ENCODE measurements at regions of chr19 and their contacts with region 1.

Region 1: DNA sequence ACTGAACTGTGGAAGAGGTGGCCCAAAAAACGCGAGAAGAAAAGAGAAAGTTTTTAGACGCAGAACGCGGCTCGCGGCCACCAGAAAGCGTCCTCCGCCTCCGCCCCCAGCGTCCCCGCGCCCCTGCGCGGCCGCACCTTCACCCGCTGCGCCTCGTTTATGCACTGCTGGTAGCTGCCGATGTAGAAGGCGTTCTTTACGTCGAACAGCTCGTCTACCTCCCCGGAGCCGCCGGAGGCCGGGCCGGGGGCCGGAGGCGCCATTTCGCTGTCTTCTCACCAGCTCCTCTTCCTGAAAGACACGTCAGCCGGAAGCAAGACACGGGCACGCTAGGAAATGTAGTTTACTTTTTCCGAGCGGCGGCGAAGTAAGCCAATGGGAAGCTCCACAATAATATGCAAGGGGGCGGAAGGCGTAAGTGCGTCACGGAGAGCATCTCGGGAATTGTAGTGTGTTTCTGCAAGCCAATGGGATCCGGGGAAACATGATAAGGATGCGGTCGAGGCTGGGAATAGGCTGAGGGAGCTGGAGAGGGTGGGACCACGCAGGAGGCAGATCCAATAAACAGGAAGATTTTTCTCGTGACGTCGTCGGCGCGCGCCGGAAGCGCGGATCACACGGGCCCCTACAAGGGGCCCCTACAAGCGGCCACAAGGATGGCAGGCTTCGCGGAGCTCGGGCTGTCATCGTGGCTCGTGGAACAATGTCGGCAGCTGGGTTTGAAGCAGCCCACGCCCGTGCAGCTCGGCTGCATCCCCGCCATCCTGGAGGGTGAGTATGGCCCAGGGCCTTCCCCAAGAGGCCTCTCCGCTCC is at the starts of genes COPE and DDX49:
- DNase-seq: peak; percentile 97 to 100 (median 99)
- H3K4me3 ChIP-seq: peak within 1 kb of the TSS; percentile 92 to 93
- H3K4me3 Mint-ChIP-seq: peak within 1 kb of the TSS; percentile 72 to 97 (median 93)
- H3K27ac ChIP-seq: peak within 1 kb of the TSS; percentile 94
- H3K27ac Mint-ChIP-seq: peak within 1 kb of the TSS; percentile 73 to 98 (median 96)
- H3K4me1 ChIP-seq: peaks cover 45% of the 10 kb centered on the region
- H3K4me1 Mint-ChIP-seq: peaks cover 21 to 64% (median 35%) of the 10 kb centered on the region in 4 donors
- H3K27me3 ChIP-seq: no peaks in the 10 kb centered on the region
- H3K27me3 Mint-ChIP-seq: no peaks in the 10 kb centered on the region
- total RNA-seq, gene COPE: 165 to 170 TPM
- total RNA-seq, gene DDX49: 40.9 to 43.6 TPM

Region 2: DNA sequence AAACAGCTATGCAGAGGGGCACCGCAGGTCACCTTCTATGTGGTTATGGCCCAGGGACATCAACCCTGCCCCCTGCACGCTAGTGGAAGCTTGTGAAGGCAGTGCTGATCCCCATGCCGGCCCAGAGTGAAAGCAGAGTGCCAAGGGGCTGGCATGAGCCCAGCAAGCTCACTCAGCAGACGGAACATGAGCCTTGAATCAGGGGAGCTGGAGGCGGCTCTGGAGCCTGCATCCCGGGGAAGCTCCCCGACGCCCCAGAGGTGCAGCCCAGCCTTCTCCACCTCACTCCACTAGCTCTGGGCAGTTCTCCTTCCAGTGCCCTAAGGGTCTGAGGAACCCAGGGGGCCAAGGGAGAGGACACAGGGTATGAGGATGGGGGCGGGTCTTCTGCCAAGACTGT is 462.3 kb before region 1 on chr19:
- CTCF ChIA-PET with region 1: no interaction called
- POLR2A ChIA-PET with region 1: no interaction called
- intact Hi-C with region 1: no loop called
- DNase-seq: no peak
- H3K4me3 ChIP-seq: no peak overlapping the region
- H3K4me3 Mint-ChIP-seq: no peak overlapping the region
- H3K27ac ChIP-seq: no peak overlapping the region
- H3K27ac Mint-ChIP-seq: peak overlapping the region in 2 of 7 donors; percentile 64 to 74
- H3K4me1 ChIP-seq: no peaks in the 10 kb centered on the region
- H3K4me1 Mint-ChIP-seq: peaks cover 1 to 11% (median 5%) of the 10 kb centered on the region in 4 donors
- H3K27me3 ChIP-seq: no peaks in the 10 kb centered on the region
- H3K27me3 Mint-ChIP-seq: no peaks in the 10 kb centered on the region

Region 3: DNA sequence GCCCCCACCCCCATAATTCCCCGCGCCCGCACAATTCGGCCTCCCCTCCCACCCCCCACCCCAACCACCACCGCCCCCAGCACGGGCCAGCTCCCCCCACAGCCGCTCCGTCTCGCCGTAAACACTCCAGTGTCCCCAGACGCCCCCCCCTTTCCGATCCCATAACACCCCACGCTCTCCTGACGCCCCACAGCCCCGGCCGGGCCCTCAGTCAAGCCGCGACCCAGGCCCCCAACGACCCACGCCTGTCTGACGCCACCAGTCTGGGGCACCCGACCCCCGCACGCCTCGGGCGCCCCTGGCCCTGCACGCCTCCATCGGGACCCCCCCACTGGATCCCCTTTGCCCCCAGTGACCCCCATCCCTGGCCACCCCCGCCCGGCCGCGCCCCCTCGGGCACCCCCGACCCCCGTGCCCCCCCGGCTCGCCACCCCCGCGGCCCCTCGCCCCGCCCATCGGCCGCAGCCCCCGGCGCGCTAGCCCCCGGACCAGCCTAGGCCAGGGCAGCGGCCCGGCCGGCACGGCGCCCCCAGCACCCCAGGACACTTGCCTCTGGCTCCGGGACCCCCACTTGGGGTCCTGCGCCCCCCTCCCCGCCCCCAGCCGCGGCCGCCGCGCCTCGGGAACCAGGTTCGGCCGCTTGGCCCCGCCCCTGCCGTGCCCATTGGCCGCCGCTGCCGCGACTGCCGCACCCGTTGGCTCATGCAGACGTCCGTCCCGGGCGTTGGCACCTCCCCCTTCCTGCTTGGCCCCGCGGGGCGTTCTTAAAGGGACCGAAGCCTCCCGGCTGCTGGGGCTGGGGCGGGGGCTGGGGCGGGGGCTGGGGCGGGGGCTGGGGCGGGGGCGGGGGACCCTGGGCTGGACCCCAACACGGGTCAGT is 376.1 kb before region 1 on chr19 and contains the start of gene FKBP8:
- CTCF ChIA-PET with region 1: no interaction called
- POLR2A ChIA-PET with region 1: interaction called, 12 read pairs
- intact Hi-C with region 1: no loop called
- DNase-seq: peak; percentile 89 to 94 (median 91)
- H3K4me3 ChIP-seq: peak within 1 kb of the TSS; percentile 52 to 59
- H3K4me3 Mint-ChIP-seq: peak within 1 kb of the TSS; percentile 91 to 100 (median 96)
- H3K27ac ChIP-seq: peak within 1 kb of the TSS; percentile 78
- H3K27ac Mint-ChIP-seq: peak within 1 kb of the TSS; percentile 97 to 99 (median 98)
- H3K4me1 ChIP-seq: peaks cover 25% of the 10 kb centered on the region
- H3K4me1 Mint-ChIP-seq: peaks cover 8 to 35% (median 21%) of the 10 kb centered on the region in 4 donors
- H3K27me3 ChIP-seq: no peaks in the 10 kb centered on the region
- H3K27me3 Mint-ChIP-seq: no peaks in the 10 kb centered on the region
- total RNA-seq, gene FKBP8: 231 to 249 TPM

Region 4: DNA sequence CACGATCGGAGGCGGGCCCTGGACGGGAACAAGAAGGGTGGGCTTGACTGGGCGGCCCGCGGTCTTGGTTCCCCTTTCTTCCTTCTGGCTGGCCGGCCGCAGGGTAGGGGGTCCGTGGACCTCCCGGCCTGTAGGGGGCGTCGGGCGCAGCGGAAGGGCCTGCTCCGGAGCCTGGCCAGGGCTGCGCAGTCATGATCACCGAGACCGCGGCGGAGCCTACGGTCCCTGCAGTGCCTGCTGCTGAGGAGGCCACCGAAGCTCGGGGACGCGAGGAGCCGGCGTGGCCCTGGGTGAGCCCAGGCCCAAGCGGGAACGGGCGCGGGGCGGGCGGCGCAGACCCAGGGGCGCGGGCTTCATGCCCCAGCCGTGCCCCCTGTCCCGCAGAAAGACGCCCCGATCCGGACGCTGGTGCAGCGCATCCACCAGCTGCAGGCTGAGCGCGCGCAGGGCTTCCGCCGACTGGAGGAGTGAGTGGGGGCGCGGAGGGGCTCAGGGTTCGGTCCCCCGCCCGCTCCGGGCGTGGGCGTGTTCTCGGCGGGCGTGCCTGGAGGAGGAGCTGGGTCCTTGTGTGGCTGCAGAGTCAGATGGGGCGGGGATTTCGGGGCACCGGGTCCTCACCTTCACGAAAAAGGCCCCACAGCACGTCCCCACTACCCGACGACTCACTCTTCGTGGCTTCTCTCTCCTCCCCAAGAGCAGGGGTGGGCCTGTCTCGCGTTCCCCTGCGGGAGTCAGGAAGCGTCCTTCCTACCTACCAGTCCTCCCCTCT is 330.5 kb before region 1 on chr19 and contains the start of gene REX1BD:
- CTCF ChIA-PET with region 1: interaction called, 3 read pairs
- POLR2A ChIA-PET with region 1: interaction called, 20 read pairs
- intact Hi-C with region 1: loop called (anchors 1 kb)
- DNase-seq: peak; percentile 86 to 95 (median 87)
- H3K4me3 ChIP-seq: peak within 1 kb of the TSS; percentile 47 to 79
- H3K4me3 Mint-ChIP-seq: peak within 1 kb of the TSS; percentile 82 to 93 (median 89)
- H3K27ac ChIP-seq: peak within 1 kb of the TSS; percentile 67
- H3K27ac Mint-ChIP-seq: peak within 1 kb of the TSS; percentile 83 to 96 (median 92)
- H3K4me1 ChIP-seq: peaks cover 36% of the 10 kb centered on the region
- H3K4me1 Mint-ChIP-seq: peaks cover 21 to 48% (median 35%) of the 10 kb centered on the region in 4 donors
- H3K27me3 ChIP-seq: no peaks in the 10 kb centered on the region
- H3K27me3 Mint-ChIP-seq: no peaks in the 10 kb centered on the region
- total RNA-seq, gene REX1BD: 150 to 154 TPM

Region 5: DNA sequence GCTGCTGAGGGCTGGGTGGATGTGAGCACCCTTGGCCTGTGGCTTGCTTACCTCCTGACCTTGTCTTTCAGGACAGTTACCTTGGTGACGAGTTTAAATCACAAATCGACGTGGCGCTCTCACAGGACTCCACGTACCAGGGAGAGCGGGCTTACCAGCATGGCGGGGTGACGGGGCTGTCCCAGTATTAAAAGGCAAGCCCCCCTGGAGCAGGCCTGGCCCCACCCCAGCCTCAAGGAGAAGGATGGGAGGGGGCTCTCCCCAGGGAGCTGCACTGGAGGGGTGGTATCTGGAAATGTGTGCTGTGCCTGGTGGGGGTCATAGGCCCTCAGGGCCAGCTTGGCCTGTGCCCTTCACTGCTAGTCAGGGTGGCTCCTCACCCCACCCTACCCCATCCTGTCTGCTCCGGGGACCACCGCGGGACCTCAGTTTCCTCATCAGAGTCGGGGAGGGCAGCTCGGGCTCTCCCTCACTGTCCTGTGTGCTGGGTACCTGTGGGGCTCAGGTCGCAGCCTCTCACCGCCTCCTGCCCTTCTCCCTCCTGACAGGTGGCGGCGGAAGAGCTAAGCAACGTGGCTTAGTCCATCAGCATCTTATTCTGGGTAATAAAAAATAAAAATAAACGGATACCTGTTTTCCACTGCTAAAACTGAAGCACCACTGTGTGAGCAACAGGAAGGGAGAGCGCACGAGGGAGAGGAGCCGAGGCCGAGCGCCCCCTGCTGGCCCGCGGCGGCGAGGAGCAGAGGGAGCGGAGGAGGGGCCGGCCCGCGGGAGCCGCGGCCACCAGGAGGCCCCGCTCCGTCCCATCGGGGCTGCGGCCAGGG is 53.1 kb before region 1 on chr19:
- CTCF ChIA-PET with region 1: no interaction called
- POLR2A ChIA-PET with region 1: no interaction called
- intact Hi-C with region 1: loop called (anchors 10 kb)
- DNase-seq: peak in 4 of 5 donors; percentile 60 to 64 (median 62)
- H3K4me3 ChIP-seq: no peak overlapping the region
- H3K4me3 Mint-ChIP-seq: no peak overlapping the region
- H3K27ac ChIP-seq: no peak overlapping the region
- H3K27ac Mint-ChIP-seq: peak overlapping the region in 2 of 7 donors; percentile 63 to 67
- H3K4me1 ChIP-seq: peaks cover 4% of the 10 kb centered on the region
- H3K4me1 Mint-ChIP-seq: peaks cover 2 to 15% (median 6%) of the 10 kb centered on the region in 4 donors
- H3K27me3 ChIP-seq: no peaks in the 10 kb centered on the region
- H3K27me3 Mint-ChIP-seq: no peaks in the 10 kb centered on the region

Region 6: DNA sequence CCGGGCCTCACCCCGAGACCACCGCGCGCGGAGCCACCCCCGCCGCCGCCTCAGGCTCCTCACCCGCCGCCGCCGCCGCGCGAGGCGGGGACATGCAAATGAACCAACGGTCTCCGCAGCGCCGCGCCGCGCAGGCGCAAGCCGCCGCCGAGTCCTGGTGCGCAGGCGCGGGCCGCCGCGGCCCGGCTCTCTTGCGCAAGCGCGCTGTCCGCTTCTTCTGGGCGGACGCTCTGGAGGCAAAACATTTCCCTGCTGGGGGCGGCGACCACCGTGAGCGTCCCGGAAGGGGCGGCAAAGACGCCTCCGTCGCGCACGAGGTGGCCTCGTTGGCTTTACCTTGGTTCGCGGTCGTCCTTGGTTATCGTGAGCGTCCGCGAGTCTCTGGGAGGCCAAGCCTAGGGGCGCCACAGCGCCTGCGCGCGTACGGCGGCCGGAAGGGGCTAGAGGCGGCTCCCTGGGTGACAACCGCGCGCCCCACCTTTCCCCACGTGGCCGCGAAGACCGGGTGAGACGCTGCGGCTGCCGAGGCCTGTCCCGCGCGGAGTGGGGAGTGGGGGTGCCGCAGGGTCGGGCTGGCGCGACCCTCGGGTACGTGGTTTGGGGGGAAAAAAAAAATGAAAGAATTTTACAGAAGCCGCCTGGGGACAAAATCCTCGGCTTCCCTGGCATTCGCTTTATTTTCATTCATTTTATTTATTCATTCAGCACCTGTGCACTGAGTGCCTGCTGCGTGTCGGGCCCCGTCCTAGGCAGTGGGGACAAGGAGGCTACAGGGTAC is 114.3 kb after region 1 on chr19 and contains the starts of genes ARMC6 and SUGP2:
- CTCF ChIA-PET with region 1: no interaction called
- POLR2A ChIA-PET with region 1: no interaction called
- intact Hi-C with region 1: loop called (anchors 10 kb)
- DNase-seq: peak; percentile 88 to 97 (median 94)
- H3K4me3 ChIP-seq: peak within 1 kb of the TSS; percentile 81
- H3K4me3 Mint-ChIP-seq: peak within 1 kb of the TSS; percentile 91 to 97 (median 93)
- H3K27ac ChIP-seq: peak within 1 kb of the TSS; percentile 82
- H3K27ac Mint-ChIP-seq: peak within 1 kb of the TSS; percentile 84 to 99 (median 94)
- H3K4me1 ChIP-seq: peaks cover 23% of the 10 kb centered on the region
- H3K4me1 Mint-ChIP-seq: peaks cover 16 to 43% (median 26%) of the 10 kb centered on the region in 4 donors
- H3K27me3 ChIP-seq: no peaks in the 10 kb centered on the region
- H3K27me3 Mint-ChIP-seq: no peaks in the 10 kb centered on the region
- total RNA-seq, gene ARMC6: 11.8 to 12.8 TPM
- total RNA-seq, gene SUGP2: 111 to 113 TPM

Region 7: GRCh38 chr19:19192078-19192882 is 273.0 kb after region 1 on chr19 and contains the starts of genes BORCS8 and RFXANK:
- CTCF ChIA-PET with region 1: no interaction called
- POLR2A ChIA-PET with region 1: interaction called, 4 read pairs
- intact Hi-C with region 1: loop called (anchors 5 kb)
- DNase-seq: peak; percentile 97 to 99 (median 99)
- H3K4me3 ChIP-seq: peak within 1 kb of the TSS; percentile 98 to 100
- H3K4me3 Mint-ChIP-seq: peak within 1 kb of the TSS; percentile 95 to 99 (median 98)
- H3K27ac ChIP-seq: peak within 1 kb of the TSS; percentile 100
- H3K27ac Mint-ChIP-seq: peak within 1 kb of the TSS; percentile 98 to 100 (median 99)
- H3K4me1 ChIP-seq: peaks cover 44% of the 10 kb centered on the region
- H3K4me1 Mint-ChIP-seq: peaks cover 18 to 55% (median 37%) of the 10 kb centered on the region in 4 donors
- H3K27me3 ChIP-seq: no peaks in the 10 kb centered on the region
- H3K27me3 Mint-ChIP-seq: no peaks in the 10 kb centered on the region
- total RNA-seq, gene BORCS8: 36.0 to 41.2 TPM
- total RNA-seq, gene RFXANK: 69.5 to 77.2 TPM

Measured in CD4-positive, alpha-beta memory T cell (primary cell).